Endothelial cell of umbilical vein (primary cell): ENCODE measurements at regions of chr6 and their contacts with region 1.

Region 1: GRCh38 chr6:135066397-135066796 is 11.8 kb upstream of the HBS1L start:
- DNase-seq: peak; percentile 68
- H3K4me3 ChIP-seq: no peak overlapping the region
- H3K27ac ChIP-seq: peak overlapping the region; percentile 49
- H3K4me1 ChIP-seq: peaks cover 12% of the 10 kb centered on the region
- H3K27me3 ChIP-seq: no peaks in the 10 kb centered on the region
- CTCF ChIP-seq: no peak
- POLR2A ChIP-seq: no peak

Region 2: GRCh38 chr6:135183532-135184440 is 117.4 kb after region 1 on chr6:
- CTCF ChIA-PET with region 1: no interaction called
- POLR2A ChIA-PET with region 1: no interaction called
- dilution Hi-C with region 1: no loop called
- intact Hi-C with region 1: loop called (anchors 5 kb)
- DNase-seq: peak; percentile 35
- H3K4me3 ChIP-seq: no peak overlapping the region
- H3K27ac ChIP-seq: no peak overlapping the region
- H3K4me1 ChIP-seq: peaks cover 27% of the 10 kb centered on the region
- H3K27me3 ChIP-seq: peaks cover 25 to 32% of the 10 kb centered on the region in 2 experiments
- CTCF ChIP-seq: peak; percentile 53
- POLR2A ChIP-seq: no peak